PC-9 (cell line): ENCODE measurements at regions of chr19 and their contacts with region 1.

Region 1: GRCh38 chr19:38929929-38930775 is at the start of gene SARS2:
- DNase-seq: peak; percentile 86 to 92
- H3K4me3 ChIP-seq: peak within 1 kb of the TSS; percentile 86
- H3K27ac ChIP-seq: peak within 1 kb of the TSS; percentile 65
- H3K4me1 ChIP-seq: peaks cover 17% of the 10 kb centered on the region; the same call in 1 of the 2 replicates
- H3K27me3 ChIP-seq: no peaks in the 10 kb centered on the region
- CTCF ChIP-seq: peak; percentile 93
- total RNA-seq, gene SARS2: 33.7 and 34.9 TPM in 2 replicates

Region 2: DNA sequence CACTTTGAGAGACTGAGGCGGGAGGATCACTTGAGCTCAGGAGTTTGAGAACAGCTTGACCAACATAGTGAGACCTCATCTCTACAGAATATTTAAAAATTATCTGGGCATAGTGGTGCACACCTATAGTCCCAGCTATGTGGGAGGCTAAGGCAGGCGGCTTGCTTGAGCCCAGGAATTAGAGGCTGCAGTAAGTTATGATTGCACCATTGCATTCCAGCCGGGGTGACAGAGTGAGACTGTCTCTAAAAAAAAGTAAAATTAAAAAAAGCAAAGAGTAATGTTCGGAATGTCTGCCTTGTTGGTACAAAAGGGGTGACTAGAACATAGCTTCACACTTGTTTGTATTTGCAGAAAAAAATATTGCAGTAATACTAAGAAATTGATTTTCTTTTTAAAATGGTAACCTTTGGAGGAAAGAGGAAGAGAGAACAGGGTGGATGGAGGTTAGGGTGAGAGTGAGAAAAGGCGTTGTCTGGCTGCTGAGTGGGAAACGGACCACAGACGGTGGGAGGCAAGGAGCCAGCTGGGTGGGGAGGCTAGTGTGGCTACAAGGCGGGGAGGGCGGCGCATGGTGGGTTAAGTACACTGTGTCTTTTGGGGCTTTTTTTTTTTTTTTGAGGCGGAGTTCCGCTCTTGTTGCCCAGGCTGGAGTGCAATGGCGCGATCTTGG is 684.2 kb before region 1 on chr19:
- CTCF ChIA-PET with region 1: interaction called, 12 read pairs
- POLR2A ChIA-PET with region 1: no interaction called
- intact Hi-C with region 1: no loop called
- DNase-seq: no peak
- H3K4me3 ChIP-seq: no peak overlapping the region
- H3K27ac ChIP-seq: no peak overlapping the region
- H3K4me1 ChIP-seq: peaks cover 7% of the 10 kb centered on the region
- H3K27me3 ChIP-seq: no peaks in the 10 kb centered on the region
- CTCF ChIP-seq: no peak

Region 3: GRCh38 chr19:38514812-38515633 is 415.1 kb before region 1 on chr19:
- CTCF ChIA-PET with region 1: no interaction called
- POLR2A ChIA-PET with region 1: no interaction called
- intact Hi-C with region 1: loop called (anchors 1 kb)
- DNase-seq: peak in 1 of 2 experiments; percentile 70
- H3K4me3 ChIP-seq: no peak overlapping the region
- H3K27ac ChIP-seq: no peak overlapping the region
- H3K4me1 ChIP-seq: no peaks in the 10 kb centered on the region
- H3K27me3 ChIP-seq: peaks cover 15% of the 10 kb centered on the region; the same call in 1 of the 2 replicates
- CTCF ChIP-seq: peak; percentile 90

Region 4: GRCh38 chr19:38618590-38619360 is 311.4 kb before region 1 on chr19 and contains the start of gene EIF3K:
- CTCF ChIA-PET with region 1: interaction called, 5 read pairs
- POLR2A ChIA-PET with region 1: no interaction called
- intact Hi-C with region 1: loop called (anchors 5 kb)
- DNase-seq: peak; percentile 96 to 99
- H3K4me3 ChIP-seq: peak within 1 kb of the TSS; percentile 87
- H3K27ac ChIP-seq: peak within 1 kb of the TSS; percentile 24
- H3K4me1 ChIP-seq: peaks cover 15% of the 10 kb centered on the region
- H3K27me3 ChIP-seq: no peaks in the 10 kb centered on the region
- CTCF ChIP-seq: no peak
- total RNA-seq, gene EIF3K: 230 and 292 TPM in 2 replicates

Region 5: GRCh38 chr19:38838573-38839269 is 91.4 kb before region 1 on chr19:
- CTCF ChIA-PET with region 1: interaction called, 6 read pairs
- POLR2A ChIA-PET with region 1: interaction called, 13 read pairs
- intact Hi-C with region 1: loop called (anchors 2 kb)
- DNase-seq: peak; percentile 94 to 98
- H3K4me3 ChIP-seq: peak overlapping the region; percentile 34; the same call in 1 of the 2 replicates
- H3K27ac ChIP-seq: peak overlapping the region; percentile 98
- H3K4me1 ChIP-seq: peaks cover 65% of the 10 kb centered on the region
- H3K27me3 ChIP-seq: no peaks in the 10 kb centered on the region
- CTCF ChIP-seq: peak; percentile 79

Region 6: DNA sequence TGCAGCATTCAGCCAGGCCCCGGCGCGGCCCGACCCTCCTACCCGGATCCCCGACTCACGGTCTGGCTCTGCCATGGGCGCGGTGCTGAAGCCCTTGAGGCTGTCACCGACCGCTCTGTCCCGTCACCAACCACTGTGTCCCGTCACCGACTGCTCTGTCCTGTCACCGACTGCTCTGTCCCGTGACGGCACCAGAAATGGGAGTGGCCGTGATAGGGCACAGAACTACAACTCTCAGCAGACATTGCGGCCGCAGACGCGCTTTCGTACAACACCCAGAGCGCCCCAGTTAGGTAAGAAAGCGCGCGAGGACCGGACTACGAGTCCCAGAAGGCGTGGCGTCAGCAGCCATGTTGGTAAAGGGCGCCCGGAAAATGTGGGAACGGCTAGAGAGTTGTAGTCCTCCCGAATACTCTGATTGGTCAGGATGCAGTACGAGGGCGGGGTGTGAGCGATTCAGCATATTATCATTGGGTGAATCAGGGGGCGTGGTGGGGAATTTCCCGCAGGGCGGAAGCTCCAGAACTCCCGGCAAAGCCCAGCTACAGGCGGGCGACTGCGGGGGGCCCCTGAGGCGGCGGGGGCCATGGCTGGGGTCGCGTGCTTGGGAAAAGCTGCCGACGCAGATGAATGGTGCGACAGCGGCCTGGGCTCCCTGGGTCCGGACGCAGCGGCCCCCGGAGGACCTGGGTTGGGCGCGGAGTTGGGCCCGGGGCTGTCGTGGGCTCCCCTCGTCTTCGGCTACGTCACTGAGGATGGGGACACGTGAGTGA is 30.5 kb before region 1 on chr19 and contains the starts of genes NFKBIB and SIRT2:
- CTCF ChIA-PET with region 1: no interaction called
- POLR2A ChIA-PET with region 1: no interaction called
- intact Hi-C with region 1: loop called (anchors 1 kb)
- DNase-seq: peak; percentile 99
- H3K4me3 ChIP-seq: peak within 1 kb of the TSS; percentile 73
- H3K27ac ChIP-seq: peak within 1 kb of the TSS; percentile 64
- H3K4me1 ChIP-seq: peaks cover 16% of the 10 kb centered on the region
- H3K27me3 ChIP-seq: no peaks in the 10 kb centered on the region
- CTCF ChIP-seq: no peak
- total RNA-seq, gene NFKBIB: 18.8 and 21.6 TPM in 2 replicates
- total RNA-seq, gene SIRT2: 29.6 and 32.9 TPM in 2 replicates

Region 7: DNA sequence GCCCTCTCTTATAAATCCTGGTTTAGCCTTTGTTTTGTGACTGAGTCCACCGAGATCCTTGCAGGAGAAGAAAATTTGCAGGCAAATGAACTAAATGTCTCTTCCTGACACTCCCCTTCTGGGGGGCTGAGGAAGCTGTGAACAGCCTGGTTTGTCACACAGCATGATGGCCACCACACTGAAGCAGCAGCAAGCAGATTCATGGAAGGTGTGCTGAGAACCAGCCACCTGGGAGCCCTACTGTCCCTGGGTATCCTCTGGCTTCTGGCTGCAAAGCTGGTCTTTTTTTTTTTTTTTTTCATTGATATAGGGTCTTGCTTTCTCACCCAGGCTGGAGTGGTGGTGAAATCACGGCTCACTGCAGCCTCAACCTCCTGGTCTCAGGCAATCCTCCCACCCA is 11.8 kb after region 1 on chr19:
- CTCF ChIA-PET with region 1: no interaction called
- POLR2A ChIA-PET with region 1: no interaction called
- intact Hi-C with region 1: no loop called
- DNase-seq: no peak
- H3K4me3 ChIP-seq: no peak overlapping the region
- H3K27ac ChIP-seq: no peak overlapping the region
- H3K4me1 ChIP-seq: no peaks in the 10 kb centered on the region
- H3K27me3 ChIP-seq: no peaks in the 10 kb centered on the region
- CTCF ChIP-seq: no peak